Heart right ventricle (tissue), 16 donors: ENCODE measurements at regions of chr2 and their contacts with region 1.

Region 1: GRCh38 chr2:36408198-36408703 is 52.7 kb downstream of the CRIM1 start:
- DNase-seq: peak in 1 of 2 donors; percentile 19
- ATAC-seq: peak; percentile 49 to 79 (median 66)
- H3K4me3 ChIP-seq: peak overlapping the region in 3 of 10 donors; percentile 4 to 14 (median 5)
- H3K27ac ChIP-seq: peak overlapping the region; percentile 0 to 80 (median 47)
- H3K4me1 ChIP-seq: peaks cover 24 to 100% (median 66%) of the 10 kb centered on the region in 9 donors
- H3K27me3 ChIP-seq: no peaks in the 10 kb centered on the region
- CTCF ChIP-seq: no peak

Region 2: GRCh38 chr2:36367895-36368353 is 40.3 kb before region 1 on chr2:
- intact Hi-C with region 1: loop called in 1 of 10 experiments (anchors 5 kb)
- DNase-seq: no peak
- ATAC-seq: peak in 3 of 8 donors; percentile 20 to 36 (median 29)
- H3K4me3 ChIP-seq: no peak overlapping the region
- H3K27ac ChIP-seq: peak overlapping the region in 3 of 10 donors; percentile 3 to 73 (median 13)
- H3K4me1 ChIP-seq: peaks cover 21 to 100% (median 81%) of the 10 kb centered on the region in 9 donors
- H3K27me3 ChIP-seq: no peaks in the 10 kb centered on the region
- CTCF ChIP-seq: no peak

Region 3: GRCh38 chr2:36459725-36460137 is 51.5 kb after region 1 on chr2:
- intact Hi-C with region 1: loop called in 1 of 10 experiments (anchors 5 kb)
- DNase-seq: peak in 1 of 2 donors; percentile 40
- ATAC-seq: peak in 6 of 8 donors; percentile 39 to 70 (median 44)
- H3K4me3 ChIP-seq: no peak overlapping the region
- H3K27ac ChIP-seq: no peak overlapping the region
- H3K4me1 ChIP-seq: peaks cover 0 to 77% (median 61%) of the 10 kb centered on the region in 9 donors
- H3K27me3 ChIP-seq: no peaks in the 10 kb centered on the region
- CTCF ChIP-seq: peak in 8 of 9 donors; percentile 25 to 68 (median 52)

Region 4: GRCh38 chr2:36486546-36487044 is 78.3 kb after region 1 on chr2:
- intact Hi-C with region 1: no loop called
- DNase-seq: no peak
- ATAC-seq: peak in 6 of 8 donors; percentile 29 to 64 (median 42)
- H3K4me3 ChIP-seq: no peak overlapping the region
- H3K27ac ChIP-seq: peak overlapping the region in 9 of 10 donors; percentile 13 to 83 (median 69)
- H3K4me1 ChIP-seq: peaks cover 14 to 75% (median 45%) of the 10 kb centered on the region in 9 donors
- H3K27me3 ChIP-seq: no peaks in the 10 kb centered on the region
- CTCF ChIP-seq: no peak